Activated CD8-positive, alpha-beta T cell treated with anti-CD3 and anti-CD28 coated beads, Interleukin-2, amount 10 ng/mL, durations not matched to agents 7 days and 5 days (primary cell): ENCODE measurements at regions of chr15 and their contacts with region 1.

Region 1: DNA sequence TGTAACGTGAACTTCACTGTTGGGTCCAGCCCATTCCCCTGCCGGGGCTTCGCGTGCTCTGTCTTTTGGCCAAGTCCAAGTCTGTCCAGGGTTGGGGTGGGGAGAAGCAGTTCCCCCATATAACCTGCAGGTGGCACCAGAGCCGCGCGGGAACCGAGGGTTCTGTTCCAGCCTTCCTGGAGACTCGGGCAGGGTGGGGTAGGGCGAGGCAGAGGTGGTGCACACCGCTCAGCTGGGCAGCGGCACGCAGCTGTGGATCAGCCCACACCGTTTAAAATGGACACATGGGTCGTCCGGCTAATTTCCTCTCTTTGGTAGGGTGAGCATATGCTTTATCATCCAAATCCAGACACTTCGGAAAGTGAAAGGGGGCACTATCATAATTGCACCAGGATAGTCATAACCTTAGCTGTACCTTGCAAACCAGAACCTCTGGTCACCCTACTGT is 118.1 kb downstream of the TBC1D2B start:
- DNase-seq: peak; percentile 84
- ATAC-seq: peak; percentile 99
- H3K4me3 Mint-ChIP-seq: peak overlapping the region; percentile 39
- H3K27ac Mint-ChIP-seq: no peak overlapping the region
- H3K4me1 Mint-ChIP-seq: peaks cover 19% of the 10 kb centered on the region
- H3K27me3 Mint-ChIP-seq: peaks cover 27% of the 10 kb centered on the region

Region 2: GRCh38 chr15:77909182-77909940 is 50.1 kb before region 1 on chr15:
- CTCF ChIA-PET with region 1: interaction called, 12 read pairs
- POLR2A ChIA-PET with region 1: no interaction called
- DNase-seq: no peak
- ATAC-seq: no peak
- H3K4me3 Mint-ChIP-seq: no peak overlapping the region
- H3K27ac Mint-ChIP-seq: no peak overlapping the region
- H3K4me1 Mint-ChIP-seq: peaks cover 1% of the 10 kb centered on the region
- H3K27me3 Mint-ChIP-seq: peaks cover 11% of the 10 kb centered on the region